ENCODE measurements at regions of chr20 and their contacts with region 1.

Region 1: DNA sequence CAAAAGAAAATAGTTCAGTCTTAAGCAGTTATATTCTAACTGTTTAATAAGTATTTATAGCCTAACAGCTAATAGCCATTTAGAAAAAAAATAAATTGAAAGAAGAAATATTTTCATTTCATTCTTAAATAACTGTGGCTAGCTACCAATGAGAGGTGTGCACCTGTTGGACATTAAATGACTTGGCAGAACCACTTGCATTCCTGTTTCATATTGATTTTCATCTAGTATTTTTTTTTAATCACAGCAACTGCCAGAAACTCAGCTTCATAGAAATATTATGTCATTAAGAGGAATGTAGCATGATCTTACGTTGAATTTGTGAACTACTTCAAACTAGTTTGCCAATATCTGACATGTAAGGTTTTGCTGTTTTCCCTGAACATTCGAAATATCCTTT is 10.1 kb downstream of the NAA20 start:
- DNase-seq: no peak
- H3K4me3 ChIP-seq: no peak overlapping the region
- H3K27ac ChIP-seq: no peak overlapping the region
- H3K4me1 ChIP-seq: no peaks in the 10 kb centered on the region
- H3K27me3 ChIP-seq: no peaks in the 10 kb centered on the region

Region 2: GRCh38 chr20:20052074-20052970 is 25.0 kb after region 1 on chr20 and contains the starts of genes CFAP61 and CRNKL1:
- CTCF ChIA-PET with region 1: interaction called, 12 read pairs
- POLR2A ChIA-PET with region 1: no interaction called
- DNase-seq: peak; percentile 98 to 99 (median 99)
- H3K4me3 ChIP-seq: peak within 1 kb of the TSS; percentile 82 to 100 (median 92)
- H3K27ac ChIP-seq: peak within 1 kb of the TSS; percentile 82 to 93
- H3K4me1 ChIP-seq: peaks cover 10 to 31% (median 24%) of the 10 kb centered on the region in 4 experiments
- H3K27me3 ChIP-seq: no peaks in the 10 kb centered on the region

Region 3: GRCh38 chr20:20360464-20360863 is 333.2 kb after region 1 on chr20:
- CTCF ChIA-PET with region 1: no interaction called
- POLR2A ChIA-PET with region 1: no interaction called
- DNase-seq: peak; percentile 60 to 81 (median 76)
- H3K4me3 ChIP-seq: no peak overlapping the region
- H3K27ac ChIP-seq: no peak overlapping the region
- H3K4me1 ChIP-seq: peaks cover 0 to 22% (median 12%) of the 10 kb centered on the region in 4 experiments
- H3K27me3 ChIP-seq: peaks cover 9 to 60% (median 41%) of the 10 kb centered on the region in 5 experiments